ENCODE measurements at regions of chr16 and their contacts with region 1.

Region 1: DNA sequence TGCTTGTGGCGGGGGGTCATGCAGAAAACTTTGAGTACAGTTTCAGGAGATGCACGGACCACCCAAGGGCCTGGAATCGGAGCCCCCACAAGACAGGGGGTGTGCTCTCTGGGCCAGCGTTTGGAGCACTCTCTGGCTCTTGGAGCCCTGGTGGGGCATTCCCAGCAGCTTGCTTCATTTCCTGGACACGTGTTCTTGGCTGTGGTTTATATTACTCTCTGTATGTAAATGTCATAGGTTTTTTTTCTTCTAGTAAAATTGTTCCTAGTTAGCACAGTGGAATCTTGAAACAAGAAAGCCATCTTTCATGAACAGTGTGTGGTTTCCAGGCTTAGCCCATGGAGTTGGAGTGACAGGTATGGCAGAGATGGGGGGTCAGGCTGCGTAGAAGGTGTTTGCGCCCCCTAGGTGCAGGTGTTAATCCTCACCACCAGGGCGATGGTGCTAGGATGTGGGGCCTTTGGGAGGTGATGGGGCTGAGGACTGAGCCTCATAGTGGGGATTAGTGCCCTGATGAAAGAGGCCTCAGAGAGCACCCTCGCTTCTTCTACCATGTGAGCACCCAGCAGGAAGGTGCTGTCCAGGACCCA is 79.8 kb downstream of the JPH3 start:
- DNase-seq: no peak
- H3K4me3 ChIP-seq: no peak overlapping the region
- H3K27ac ChIP-seq: no peak overlapping the region
- H3K4me1 ChIP-seq: no peaks in the 10 kb centered on the region
- H3K27me3 ChIP-seq: no peaks in the 10 kb centered on the region
- CTCF ChIP-seq: no peak
- EP300 ChIP-seq: no peak
- POLR2A ChIP-seq: no peak

Region 2: DNA sequence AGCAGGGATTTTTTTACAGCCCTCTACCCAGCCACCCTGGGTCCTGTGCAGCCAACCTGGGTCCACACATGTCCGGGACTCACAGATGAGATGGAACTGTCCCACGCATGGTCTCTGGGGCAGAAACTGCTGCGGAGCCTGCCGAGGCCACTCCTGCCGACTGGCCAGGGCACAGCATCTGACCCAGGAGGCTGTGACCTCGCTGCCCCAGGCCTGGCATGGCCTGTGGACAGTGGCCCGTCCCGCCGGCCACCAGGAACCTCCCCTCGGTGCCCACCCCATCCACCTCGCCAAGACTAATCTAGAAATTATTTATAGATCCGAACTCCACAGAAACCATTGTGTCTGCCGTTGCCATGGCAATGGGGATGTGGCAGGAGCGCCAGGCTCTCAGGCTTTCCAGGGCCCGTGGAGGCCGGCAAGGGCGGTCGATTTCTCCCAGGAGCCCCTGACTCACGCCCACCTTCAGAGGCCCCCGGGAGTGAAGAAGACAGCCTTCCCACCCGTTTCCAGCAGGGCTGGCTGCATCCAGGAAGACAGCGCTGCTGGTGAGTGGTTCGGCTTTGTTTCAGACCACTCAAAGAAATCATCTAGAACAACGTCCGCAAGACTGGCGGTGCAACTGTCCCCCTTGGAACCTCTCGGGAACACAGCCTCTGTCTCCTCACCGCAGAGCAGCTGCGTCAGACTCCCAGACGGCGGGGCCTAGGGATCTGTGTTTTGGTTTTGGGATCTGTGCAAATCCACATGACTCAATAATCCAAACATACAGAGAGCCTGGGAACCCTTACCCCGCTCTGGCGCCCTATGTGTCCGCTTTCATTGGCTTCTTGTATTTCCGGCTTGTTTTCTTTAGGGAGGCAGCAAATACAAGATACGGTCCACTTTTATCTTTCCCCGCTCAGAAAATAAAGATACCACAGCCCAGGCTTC is 140.9 kb before region 1 on chr16:
- intact Hi-C with region 1: no loop called
- DNase-seq: peak; percentile 35 to 69 (median 62)
- H3K4me3 ChIP-seq: no peak overlapping the region
- H3K27ac ChIP-seq: peak overlapping the region in 1 of 2 donors; percentile 28
- H3K4me1 ChIP-seq: peaks cover 8% of the 10 kb centered on the region
- H3K27me3 ChIP-seq: no peaks in the 10 kb centered on the region
- CTCF ChIP-seq: no peak
- EP300 ChIP-seq: no peak
- POLR2A ChIP-seq: no peak

Region 3: DNA sequence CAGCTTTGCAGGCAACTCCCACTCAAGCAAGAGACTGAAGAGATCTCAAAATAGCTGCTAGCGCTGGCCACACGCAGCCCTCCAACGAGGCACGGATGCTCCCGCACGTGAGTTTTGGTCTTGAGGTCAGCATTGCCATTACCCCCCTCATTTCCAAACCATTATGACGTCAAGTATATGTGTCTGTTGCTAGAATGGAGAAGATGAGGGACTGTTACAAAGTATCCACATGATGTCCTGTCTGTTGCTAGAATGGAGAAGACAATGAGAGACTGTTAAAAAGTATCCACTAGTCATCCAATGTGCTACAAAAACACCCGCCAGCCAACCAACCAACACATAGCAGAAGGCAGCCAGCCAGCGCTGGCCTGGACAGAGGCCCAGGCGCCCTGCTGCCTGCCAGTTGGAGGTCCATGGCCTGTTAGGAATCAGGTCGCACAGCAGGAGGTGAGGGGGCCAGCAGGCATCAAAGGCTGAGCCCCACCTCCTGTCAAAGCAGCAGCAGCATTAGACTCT is 58.9 kb after region 1 on chr16:
- intact Hi-C with region 1: loop called in 1 of 4 experiments (anchors 10 kb)
- DNase-seq: peak in 3 of 5 donors; percentile 29 to 65 (median 65)
- H3K4me3 ChIP-seq: no peak overlapping the region
- H3K27ac ChIP-seq: peak overlapping the region in 1 of 2 donors; percentile 52
- H3K4me1 ChIP-seq: peaks cover 5% of the 10 kb centered on the region
- H3K27me3 ChIP-seq: no peaks in the 10 kb centered on the region
- CTCF ChIP-seq: no peak
- EP300 ChIP-seq: no peak
- POLR2A ChIP-seq: no peak

Region 4: GRCh38 chr16:87963400-87963799 is 281.3 kb after region 1 on chr16:
- intact Hi-C with region 1: no loop called
- DNase-seq: no peak
- H3K4me3 ChIP-seq: no peak overlapping the region
- H3K27ac ChIP-seq: no peak overlapping the region
- H3K4me1 ChIP-seq: peaks cover 15% of the 10 kb centered on the region
- H3K27me3 ChIP-seq: no peaks in the 10 kb centered on the region
- CTCF ChIP-seq: no peak
- EP300 ChIP-seq: no peak
- POLR2A ChIP-seq: no peak

Measured in ovary (tissue), 10 donors.